Dendritic cell treated with granulocyte-macrophage colony-stimulating factor and Interleukin-4, amounts not matched to agents 40 ng/mL and 50 ng/mL, for 4 days (primary cell): ENCODE measurements at regions of chr17 and their contacts with region 1.

Region 1: GRCh38 chr17:28726226-28727130 is at the start of gene TLCD1:
- H3K4me3 Mint-ChIP-seq: peak within 1 kb of the TSS; percentile 96
- H3K27ac Mint-ChIP-seq: peak within 1 kb of the TSS; percentile 83
- H3K4me1 Mint-ChIP-seq: peaks cover 58% of the 10 kb centered on the region
- H3K27me3 Mint-ChIP-seq: peaks cover 2% of the 10 kb centered on the region

Region 2: GRCh38 chr17:28743225-28744103 is 17.0 kb after region 1 on chr17 and contains the start of gene TRAF4:
- intact Hi-C with region 1: loop called (anchors 1 kb)
- H3K4me3 Mint-ChIP-seq: peak within 1 kb of the TSS; percentile 79
- H3K27ac Mint-ChIP-seq: peak within 1 kb of the TSS; percentile 85
- H3K4me1 Mint-ChIP-seq: peaks cover 57% of the 10 kb centered on the region
- H3K27me3 Mint-ChIP-seq: peaks cover 18% of the 10 kb centered on the region

Region 3: GRCh38 chr17:28750178-28751047 is 23.9 kb after region 1 on chr17:
- intact Hi-C with region 1: loop called (anchors 1 kb)
- H3K4me3 Mint-ChIP-seq: no peak overlapping the region
- H3K27ac Mint-ChIP-seq: no peak overlapping the region
- H3K4me1 Mint-ChIP-seq: peaks cover 19% of the 10 kb centered on the region
- H3K27me3 Mint-ChIP-seq: no peaks in the 10 kb centered on the region

Region 4: DNA sequence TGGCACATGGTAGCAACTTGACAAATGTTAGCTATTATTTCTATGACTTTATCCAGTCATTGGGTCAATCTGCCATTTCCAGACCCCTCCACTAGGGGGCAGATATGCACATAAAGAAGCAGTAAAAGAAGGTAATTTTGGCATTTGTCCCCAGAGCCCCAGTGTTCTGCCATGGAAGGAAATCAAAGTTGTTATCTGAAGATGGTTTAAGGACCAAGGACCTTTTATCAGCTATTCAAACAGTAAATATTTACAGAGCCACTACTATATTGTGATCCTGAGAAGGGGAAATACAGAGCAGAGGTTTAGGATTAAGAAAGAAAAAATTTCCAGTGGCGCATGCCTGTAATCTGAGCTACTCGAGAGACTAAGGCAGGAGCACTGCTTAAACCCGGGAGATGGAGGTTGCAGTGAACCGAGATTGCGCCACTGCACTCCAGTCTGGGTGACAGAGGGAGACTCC is 37.4 kb after region 1 on chr17:
- intact Hi-C with region 1: loop called (anchors 5 kb)
- H3K4me3 Mint-ChIP-seq: no peak overlapping the region
- H3K27ac Mint-ChIP-seq: no peak overlapping the region
- H3K4me1 Mint-ChIP-seq: peaks cover 19% of the 10 kb centered on the region
- H3K27me3 Mint-ChIP-seq: no peaks in the 10 kb centered on the region

Region 5: DNA sequence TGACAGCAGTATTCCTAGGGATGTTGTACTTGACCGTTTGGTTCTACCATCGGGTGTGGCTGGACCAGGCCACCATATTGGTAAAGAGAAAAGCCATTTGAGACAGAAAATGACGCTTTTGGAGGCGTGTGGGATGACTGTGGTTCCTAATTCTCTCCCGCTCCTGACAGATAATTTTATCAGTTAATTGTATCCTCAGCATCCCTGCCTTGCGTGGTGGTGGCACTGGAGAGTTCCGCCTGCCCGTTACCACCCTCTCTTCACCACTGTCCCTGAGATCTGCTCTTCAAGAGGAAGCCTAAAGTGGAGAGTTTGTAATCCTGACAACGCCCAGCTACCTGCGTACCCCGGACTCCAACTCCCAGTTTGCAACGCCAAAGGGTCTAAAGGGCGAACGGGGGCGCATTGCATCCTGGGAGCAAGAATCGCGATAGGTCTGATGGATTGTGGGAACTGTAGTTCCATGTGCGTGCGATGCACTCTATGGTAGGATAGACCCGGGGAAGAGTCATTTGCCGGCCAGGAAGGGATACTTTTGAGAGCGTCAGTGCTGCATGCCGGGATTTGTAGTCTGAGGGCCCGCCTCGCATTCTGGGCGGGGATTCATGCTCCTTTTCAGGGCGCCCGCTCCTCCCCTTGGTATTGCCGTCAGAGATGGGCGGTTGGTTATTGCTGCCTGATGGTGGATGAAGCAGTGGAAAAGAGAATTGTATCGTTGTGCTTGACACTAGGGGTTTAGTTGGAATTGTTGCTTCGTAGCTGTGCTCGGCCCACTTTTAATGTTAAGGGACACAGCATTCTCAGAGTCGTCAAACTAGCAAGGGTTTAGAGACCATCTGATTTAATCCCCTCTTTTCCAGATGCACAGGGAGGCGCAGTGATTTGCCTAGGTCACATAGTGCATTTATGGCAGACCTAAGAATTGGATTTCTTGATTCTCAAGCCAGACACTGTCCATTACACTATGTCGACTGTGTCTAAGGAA is 225.8 kb after region 1 on chr17:
- intact Hi-C with region 1: loop called (anchors 2 kb)
- H3K4me3 Mint-ChIP-seq: no peak overlapping the region
- H3K27ac Mint-ChIP-seq: no peak overlapping the region
- H3K4me1 Mint-ChIP-seq: peaks cover 16% of the 10 kb centered on the region
- H3K27me3 Mint-ChIP-seq: no peaks in the 10 kb centered on the region